Calu3 (cell line): ENCODE measurements at regions of chr4 and their contacts with region 1.

Region 1: GRCh38 chr4:110211007-110211769 is 12.8 kb upstream of the ELOVL6 start:
- DNase-seq: no peak
- H3K4me3 Mint-ChIP-seq: no peak overlapping the region
- H3K27ac Mint-ChIP-seq: no peak overlapping the region
- H3K4me1 Mint-ChIP-seq: peaks cover 2% of the 10 kb centered on the region
- H3K27me3 Mint-ChIP-seq: no peaks in the 10 kb centered on the region
- CTCF ChIP-seq: peak; percentile 48

Region 2: GRCh38 chr4:110049951-110050925 is 160.9 kb before region 1 on chr4:
- CTCF ChIA-PET with region 1: interaction called, 3 read pairs
- intact Hi-C with region 1: loop called (anchors 2 kb)
- DNase-seq: peak; percentile 18
- H3K4me3 Mint-ChIP-seq: no peak overlapping the region
- H3K27ac Mint-ChIP-seq: no peak overlapping the region
- H3K4me1 Mint-ChIP-seq: no peaks in the 10 kb centered on the region
- H3K27me3 Mint-ChIP-seq: no peaks in the 10 kb centered on the region
- CTCF ChIP-seq: peak; percentile 60